ENCODE measurements at regions of chr3 and their contacts with region 1.

Region 1: GRCh38 chr3:131636266-131636775 is 133.6 kb upstream of the MRPL3 start:
- DNase-seq: no peak
- ATAC-seq: no peak
- H3K4me3 ChIP-seq: no peak overlapping the region
- H3K27ac ChIP-seq: no peak overlapping the region
- H3K4me1 ChIP-seq: no peaks in the 10 kb centered on the region
- H3K27me3 ChIP-seq: no peaks in the 10 kb centered on the region
- CTCF ChIP-seq: no peak

Region 2: DNA sequence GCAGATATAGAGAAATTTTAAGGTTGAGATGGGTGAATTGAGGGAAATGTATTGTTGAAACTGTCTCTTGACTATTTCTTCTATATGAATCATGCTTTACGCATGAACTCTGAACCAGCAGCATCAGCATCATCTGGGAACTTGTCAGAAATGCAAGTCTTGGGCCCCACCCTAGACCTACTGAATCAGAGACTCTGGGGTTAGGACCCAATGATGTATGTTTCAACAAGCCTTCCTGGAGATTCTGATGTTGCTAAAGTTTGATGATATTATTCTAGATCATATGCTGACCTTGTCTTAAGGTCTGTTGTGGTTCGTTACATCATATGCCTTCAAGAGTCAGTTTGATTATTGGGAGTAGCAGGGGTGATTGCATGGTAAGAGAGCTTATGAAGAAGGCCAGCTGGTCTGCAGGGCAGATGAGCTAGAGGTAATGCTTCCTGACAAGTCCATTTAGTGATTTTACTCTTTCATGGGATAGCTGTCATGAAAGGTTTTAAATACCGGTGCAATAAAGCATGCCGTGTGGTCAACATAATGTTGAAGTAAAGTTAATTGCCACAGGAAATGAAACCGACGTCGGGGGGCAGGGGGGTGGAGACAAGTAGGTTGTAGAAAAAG is 18.9 kb after region 1 on chr3:
- CTCF ChIA-PET with region 1: interaction called, 10 read pairs
- POLR2A ChIA-PET with region 1: no interaction called
- in situ Hi-C with region 1: no loop called
- intact Hi-C with region 1: no loop called
- DNase-seq: no peak
- ATAC-seq: no peak
- H3K4me3 ChIP-seq: no peak overlapping the region
- H3K27ac ChIP-seq: no peak overlapping the region
- H3K4me1 ChIP-seq: no peaks in the 10 kb centered on the region
- H3K27me3 ChIP-seq: no peaks in the 10 kb centered on the region
- CTCF ChIP-seq: no peak

Region 3: DNA sequence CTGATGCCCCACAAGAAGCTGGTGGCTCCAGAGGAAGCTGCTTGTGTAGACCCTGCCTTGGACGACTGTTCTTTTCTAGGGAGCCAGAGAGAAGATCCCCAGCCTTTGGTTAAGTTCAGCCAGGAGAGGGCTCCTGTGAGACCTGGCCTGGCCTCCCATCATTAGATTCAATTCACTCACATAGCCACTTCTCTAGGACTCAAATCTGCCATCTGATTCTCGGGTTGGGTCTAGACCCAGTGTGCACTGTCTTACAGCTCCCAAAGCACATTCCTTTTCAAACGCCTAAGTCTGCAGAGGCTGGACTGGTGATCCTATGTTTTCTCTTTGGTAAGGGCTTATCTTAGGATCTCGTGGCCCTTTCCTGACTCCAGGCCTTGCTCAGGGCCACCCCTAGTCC is 1167.6 kb after region 1 on chr3:
- CTCF ChIA-PET with region 1: no interaction called
- POLR2A ChIA-PET with region 1: no interaction called
- in situ Hi-C with region 1: no loop called
- intact Hi-C with region 1: no loop called
- DNase-seq: no peak
- ATAC-seq: no peak; the same call in 1 of the 2 replicates
- H3K4me3 ChIP-seq: no peak overlapping the region
- H3K27ac ChIP-seq: no peak overlapping the region
- H3K4me1 ChIP-seq: no peaks in the 10 kb centered on the region
- H3K27me3 ChIP-seq: no peaks in the 10 kb centered on the region
- CTCF ChIP-seq: peak; percentile 34

Measured in Panc1 (cell line).